ENCODE measurements at regions of chr6 and their contacts with region 1.

Region 1: DNA sequence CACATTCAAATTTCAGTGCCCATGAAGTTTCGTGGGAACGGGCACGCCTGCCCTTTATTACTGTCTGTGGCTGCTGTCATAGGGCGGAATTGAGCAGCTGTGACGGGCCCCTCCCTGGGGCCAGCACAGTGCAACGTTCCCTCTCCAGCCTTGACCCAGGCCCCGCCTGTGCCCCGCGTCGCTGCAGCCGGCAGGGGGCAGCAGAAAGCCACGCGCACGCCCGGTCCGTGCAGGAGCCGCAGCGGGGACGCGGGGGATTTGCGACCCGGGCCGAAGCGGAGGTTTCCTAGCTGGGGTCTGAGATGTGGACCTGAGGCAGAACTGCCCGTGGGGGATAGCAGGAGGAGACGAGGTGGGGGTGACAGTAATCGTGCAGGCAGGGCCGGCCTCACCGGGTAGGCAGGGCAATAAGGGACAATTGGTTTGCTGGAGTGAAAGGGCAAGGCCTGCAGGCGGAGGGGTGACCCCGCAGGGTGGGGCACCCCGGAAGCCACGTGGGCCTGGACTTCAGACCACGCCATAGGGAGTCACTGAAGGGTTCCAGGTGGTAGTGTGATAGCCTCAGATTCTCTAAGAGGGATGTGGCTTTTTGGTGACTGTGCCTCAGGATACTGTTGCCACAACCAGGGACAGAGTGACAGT is 54.4 kb downstream of the SYTL3 start:
- DNase-seq: peak; percentile 86 to 90
- H3K4me3 ChIP-seq: peak overlapping the region in 1 of 3 donors; percentile 13
- H3K27ac ChIP-seq: peak overlapping the region; percentile 85 to 92 (median 91)
- H3K4me1 ChIP-seq: peaks cover 47 to 51% of the 10 kb centered on the region in 2 donors
- H3K27me3 ChIP-seq: no peaks in the 10 kb centered on the region
- CTCF ChIP-seq: peak; percentile 90 to 100 (median 96)
- POLR2A ChIP-seq: peak in 1 of 2 donors; percentile 53

Region 2: GRCh38 chr6:158644231-158645063 is 59.9 kb before region 1 on chr6 and contains the start of gene DYNLT1:
- intact Hi-C with region 1: no loop called
- DNase-seq: peak; percentile 91
- H3K4me3 ChIP-seq: peak within 1 kb of the TSS; percentile 82 to 95 (median 89)
- H3K27ac ChIP-seq: peak within 1 kb of the TSS; percentile 85 to 97 (median 91)
- H3K4me1 ChIP-seq: peaks cover 22 to 37% of the 10 kb centered on the region in 2 donors
- H3K27me3 ChIP-seq: no peaks in the 10 kb centered on the region
- CTCF ChIP-seq: no peak
- POLR2A ChIP-seq: peak; percentile 92 to 98
- total RNA-seq, gene DYNLT1: 76.6 to 113 (median 93.4) TPM

Region 3: DNA sequence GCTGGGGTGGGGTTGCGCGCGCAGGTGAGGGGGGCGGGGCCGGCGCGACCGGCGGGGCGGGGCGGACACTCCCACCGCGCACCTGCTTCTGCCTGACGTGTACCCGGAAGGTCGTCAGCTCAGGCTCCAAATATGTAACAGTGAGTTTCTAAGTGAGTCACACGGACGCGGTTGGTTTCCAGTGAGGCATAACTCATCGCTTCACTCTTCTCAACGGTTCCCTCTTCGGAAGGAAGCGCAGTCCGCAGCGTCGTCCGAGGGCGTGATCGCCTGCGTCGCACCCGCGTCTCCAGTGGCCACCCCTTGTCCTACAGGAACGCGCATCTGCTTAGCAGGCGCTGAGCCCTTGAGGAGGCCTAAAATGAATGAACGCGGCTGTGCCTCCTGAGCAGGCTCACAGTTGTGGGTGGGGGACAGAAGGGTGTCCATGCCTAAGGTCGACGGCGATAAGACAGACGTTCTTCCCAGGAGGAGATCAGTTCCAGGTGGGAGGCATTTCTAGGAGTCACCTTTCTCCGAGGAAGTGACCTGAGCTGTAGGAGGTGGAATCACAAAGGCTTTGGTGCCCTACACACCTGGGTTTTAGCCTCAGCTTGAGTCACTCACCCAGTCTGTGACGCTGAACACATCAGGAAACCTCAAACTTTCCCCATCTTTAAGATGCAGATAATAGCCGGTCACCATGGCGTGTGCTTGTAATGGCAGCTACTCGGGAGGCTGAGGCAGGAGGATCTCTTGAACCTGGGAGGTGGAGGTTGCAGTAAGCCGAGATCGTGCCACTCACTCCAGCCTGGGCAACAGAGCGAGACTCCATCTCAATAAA is 165.7 kb after region 1 on chr6:
- intact Hi-C with region 1: loop called (anchors 10 kb)
- DNase-seq: peak; percentile 94 to 95
- H3K4me3 ChIP-seq: peak overlapping the region in 1 of 3 donors; percentile 26
- H3K27ac ChIP-seq: peak overlapping the region; percentile 94 to 98 (median 97)
- H3K4me1 ChIP-seq: peaks cover 32 to 33% of the 10 kb centered on the region in 2 donors
- H3K27me3 ChIP-seq: no peaks in the 10 kb centered on the region
- CTCF ChIP-seq: peak in 3 of 6 experiments; percentile 20 to 31 (median 25)
- POLR2A ChIP-seq: peak; percentile 30 to 82

Region 4: GRCh38 chr6:158972241-158973233 is 268.2 kb after region 1 on chr6:
- intact Hi-C with region 1: loop called (anchors 5 kb)
- DNase-seq: no peak
- H3K4me3 ChIP-seq: no peak overlapping the region
- H3K27ac ChIP-seq: no peak overlapping the region
- H3K4me1 ChIP-seq: no peaks in the 10 kb centered on the region
- H3K27me3 ChIP-seq: no peaks in the 10 kb centered on the region
- CTCF ChIP-seq: peak; percentile 14 to 75 (median 57)
- POLR2A ChIP-seq: no peak

Measured in thyroid gland (tissue), 4 donors.